ENCODE measurements at regions of chr4 and their contacts with region 1.

Region 1: GRCh38 chr4:15001869-15002658 is at the start of gene CPEB2:
- DNase-seq: peak; percentile 97
- ATAC-seq: peak; percentile 65
- H3K4me3 ChIP-seq: peak within 1 kb of the TSS; percentile 69
- H3K27ac ChIP-seq: peak within 1 kb of the TSS; percentile 93
- H3K4me1 ChIP-seq: no peaks in the 10 kb centered on the region
- H3K27me3 ChIP-seq: no peaks in the 10 kb centered on the region
- CTCF ChIP-seq: no peak
- POLR2A ChIP-seq: peak; percentile 96
- RAD21 ChIP-seq: no peak
- total RNA-seq, gene CPEB2: 10.6 and 18.1 TPM in 2 replicates

Region 2: GRCh38 chr4:13627606-13628301 is 1374.3 kb before region 1 on chr4 and contains the start of gene BOD1L1:
- CTCF ChIA-PET with region 1: no interaction called
- POLR2A ChIA-PET with region 1: no interaction called
- dilution Hi-C with region 1: no loop called
- in situ Hi-C with region 1: no loop called
- intact Hi-C with region 1: loop called (anchors 2 kb)
- DNase-seq: peak; percentile 89
- ATAC-seq: peak; percentile 94
- H3K4me3 ChIP-seq: peak within 1 kb of the TSS; percentile 94
- H3K27ac ChIP-seq: peak within 1 kb of the TSS; percentile 90
- H3K4me1 ChIP-seq: peaks cover 5% of the 10 kb centered on the region
- H3K27me3 ChIP-seq: no peaks in the 10 kb centered on the region
- CTCF ChIP-seq: peak; percentile 53
- POLR2A ChIP-seq: peak; percentile 89
- RAD21 ChIP-seq: peak; percentile 6; the same call in 1 of the 2 replicates
- total RNA-seq, gene BOD1L1: 26.9 and 34.4 TPM in 2 replicates

Region 3: DNA sequence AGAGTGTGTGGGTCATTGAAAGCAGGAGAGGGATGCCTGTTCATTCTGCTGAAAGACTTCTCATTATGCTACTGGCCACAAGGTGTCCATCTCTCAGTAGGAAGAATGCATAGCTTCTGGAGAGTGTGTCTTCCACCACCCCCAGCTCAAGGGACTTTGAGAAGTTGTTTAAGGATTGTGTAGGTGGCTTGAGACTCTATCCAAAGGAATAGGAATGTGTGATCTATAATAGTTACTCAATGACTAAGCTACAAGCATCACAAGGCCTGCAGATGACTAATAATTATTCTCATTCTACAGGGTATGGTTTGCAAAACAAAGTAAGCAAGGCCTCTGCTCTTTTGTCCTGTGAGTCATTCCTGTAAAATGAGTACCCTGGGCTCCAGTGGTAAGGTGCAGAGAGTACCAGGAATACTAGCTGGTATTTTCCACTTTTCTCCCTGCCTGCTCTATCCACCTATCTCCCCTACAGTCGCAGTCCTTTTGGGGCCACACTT is 1094.8 kb before region 1 on chr4:
- CTCF ChIA-PET with region 1: no interaction called
- POLR2A ChIA-PET with region 1: no interaction called
- dilution Hi-C with region 1: no loop called
- in situ Hi-C with region 1: no loop called
- intact Hi-C with region 1: loop called (anchors 5 kb)
- DNase-seq: peak; percentile 99
- ATAC-seq: peak; percentile 87
- H3K4me3 ChIP-seq: no peak overlapping the region
- H3K27ac ChIP-seq: peak overlapping the region; percentile 98
- H3K4me1 ChIP-seq: peaks cover 15% of the 10 kb centered on the region
- H3K27me3 ChIP-seq: no peaks in the 10 kb centered on the region
- CTCF ChIP-seq: peak; percentile 60
- POLR2A ChIP-seq: peak; percentile 52; the same call in 1 of the 2 replicates
- RAD21 ChIP-seq: peak; percentile 81

Region 4: GRCh38 chr4:13988353-13989305 is 1013.4 kb before region 1 on chr4:
- CTCF ChIA-PET with region 1: no interaction called
- POLR2A ChIA-PET with region 1: no interaction called
- dilution Hi-C with region 1: no loop called
- in situ Hi-C with region 1: no loop called
- intact Hi-C with region 1: loop called (anchors 2 kb)
- DNase-seq: peak; percentile 97
- ATAC-seq: peak; percentile 73
- H3K4me3 ChIP-seq: no peak overlapping the region
- H3K27ac ChIP-seq: peak overlapping the region; percentile 39
- H3K4me1 ChIP-seq: peaks cover 18% of the 10 kb centered on the region
- H3K27me3 ChIP-seq: no peaks in the 10 kb centered on the region
- CTCF ChIP-seq: no peak
- POLR2A ChIP-seq: no peak
- RAD21 ChIP-seq: no peak; the same call in 1 of the 2 replicates

Region 5: GRCh38 chr4:14916554-14917297 is 85.3 kb before region 1 on chr4:
- CTCF ChIA-PET with region 1: no interaction called
- POLR2A ChIA-PET with region 1: no interaction called
- dilution Hi-C with region 1: no loop called
- in situ Hi-C with region 1: no loop called
- intact Hi-C with region 1: loop called (anchors 5 kb)
- DNase-seq: peak; percentile 84
- ATAC-seq: peak; percentile 88
- H3K4me3 ChIP-seq: no peak overlapping the region
- H3K27ac ChIP-seq: no peak overlapping the region
- H3K4me1 ChIP-seq: peaks cover 5% of the 10 kb centered on the region
- H3K27me3 ChIP-seq: no peaks in the 10 kb centered on the region; the same call in 1 of the 2 replicates
- CTCF ChIP-seq: no peak
- POLR2A ChIP-seq: no peak
- RAD21 ChIP-seq: no peak

Region 6: DNA sequence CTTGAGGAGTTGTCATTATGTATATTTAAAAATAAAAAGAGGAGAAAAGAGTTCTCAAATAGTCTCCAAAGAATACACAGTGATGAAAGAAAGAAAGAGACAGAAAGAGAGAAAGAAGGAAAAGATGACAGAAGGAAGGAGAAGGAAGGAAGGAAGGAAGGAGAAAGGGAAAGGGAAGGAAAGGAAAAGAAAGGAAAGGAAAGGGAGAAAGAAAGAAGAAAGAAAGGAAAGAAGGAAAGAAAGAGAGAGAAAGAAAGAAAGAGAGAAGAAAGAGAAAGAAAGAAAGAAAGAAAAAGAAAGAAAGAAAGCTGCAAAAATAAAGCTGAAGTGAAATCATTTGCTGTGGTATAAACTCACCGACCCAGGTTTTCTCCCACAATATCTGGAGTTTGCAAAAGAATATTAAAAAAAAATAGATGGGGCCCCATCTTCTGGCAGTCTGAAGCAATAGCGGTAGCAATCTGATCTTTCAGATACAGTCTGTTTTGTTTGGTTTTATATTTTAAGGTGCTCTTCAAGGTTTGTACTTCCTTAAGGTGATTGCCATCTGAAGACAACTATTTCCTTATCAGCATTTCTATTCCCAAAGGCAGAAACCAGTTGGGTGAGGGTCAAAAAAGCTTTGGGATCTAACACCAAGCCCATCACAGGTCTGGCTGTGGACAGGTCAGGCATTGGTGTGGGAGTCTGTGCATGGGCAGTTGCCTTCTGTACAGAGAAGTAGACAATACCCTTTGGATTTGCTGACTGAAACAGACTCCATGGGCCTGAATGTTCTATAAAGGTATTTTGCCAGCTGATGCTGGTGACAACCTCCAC is 160.6 kb after region 1 on chr4:
- CTCF ChIA-PET with region 1: no interaction called
- POLR2A ChIA-PET with region 1: no interaction called
- dilution Hi-C with region 1: no loop called
- in situ Hi-C with region 1: no loop called
- intact Hi-C with region 1: loop called (anchors 2 kb)
- DNase-seq: peak; percentile 53
- ATAC-seq: peak; percentile 54
- H3K4me3 ChIP-seq: no peak overlapping the region
- H3K27ac ChIP-seq: no peak overlapping the region
- H3K4me1 ChIP-seq: peaks cover 2% of the 10 kb centered on the region; the same call in 1 of the 2 replicates
- H3K27me3 ChIP-seq: peaks cover 3% of the 10 kb centered on the region
- CTCF ChIP-seq: peak; percentile 55
- POLR2A ChIP-seq: no peak
- RAD21 ChIP-seq: peak; percentile 54

Region 7: GRCh38 chr4:15668566-15669435 is 666.7 kb after region 1 on chr4:
- CTCF ChIA-PET with region 1: no interaction called
- POLR2A ChIA-PET with region 1: no interaction called
- dilution Hi-C with region 1: no loop called
- in situ Hi-C with region 1: no loop called
- intact Hi-C with region 1: no loop called
- DNase-seq: no peak
- ATAC-seq: peak; percentile 70
- H3K4me3 ChIP-seq: no peak overlapping the region
- H3K27ac ChIP-seq: no peak overlapping the region
- H3K4me1 ChIP-seq: peaks cover 5% of the 10 kb centered on the region; the same call in 1 of the 2 replicates
- H3K27me3 ChIP-seq: no peaks in the 10 kb centered on the region
- CTCF ChIP-seq: no peak
- POLR2A ChIP-seq: no peak
- RAD21 ChIP-seq: no peak

Region 8: DNA sequence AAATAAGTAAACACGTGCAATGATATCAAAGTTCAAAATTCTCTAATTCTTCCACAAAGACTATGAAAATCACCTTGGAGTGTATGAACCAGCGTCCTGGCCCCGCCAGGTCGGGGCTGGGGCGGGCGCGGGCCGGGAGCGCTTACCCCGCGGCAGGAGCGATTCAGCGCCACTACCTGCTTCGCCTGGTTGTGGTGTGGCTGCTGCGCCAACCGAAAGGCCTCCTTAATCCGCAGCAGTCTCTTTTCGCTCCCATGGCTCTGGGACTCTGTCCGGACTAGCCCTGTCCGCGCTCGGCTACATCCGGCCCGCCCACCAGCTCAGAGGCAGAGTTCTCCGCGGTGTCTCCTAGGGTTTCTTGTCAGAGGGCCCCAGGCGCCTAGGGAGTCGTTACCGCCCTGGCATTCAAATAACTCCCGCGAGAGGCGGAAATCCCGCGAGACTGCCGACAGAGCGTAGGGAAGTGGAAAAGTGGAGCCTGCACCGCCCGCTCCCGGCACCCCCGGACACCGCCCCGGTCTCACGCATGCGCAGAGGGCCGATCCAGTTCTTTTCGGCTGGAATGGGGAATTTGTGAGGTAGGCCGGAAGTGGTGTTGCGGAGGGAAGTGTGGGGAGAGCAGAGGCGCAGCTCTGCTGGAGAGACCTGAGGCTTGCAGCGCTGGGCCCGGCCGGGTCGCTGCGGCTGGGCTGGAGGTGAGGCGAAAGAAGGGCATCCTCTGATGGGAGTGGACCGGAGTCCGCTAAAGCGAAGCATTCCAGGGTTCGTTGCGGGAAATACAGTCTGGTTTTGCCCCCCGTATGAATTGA is 679.3 kb after region 1 on chr4 and contains the start of gene FAM200B:
- CTCF ChIA-PET with region 1: no interaction called
- POLR2A ChIA-PET with region 1: no interaction called
- dilution Hi-C with region 1: no loop called
- in situ Hi-C with region 1: loop called (anchors 25 kb)
- intact Hi-C with region 1: no loop called
- DNase-seq: peak; percentile 97
- ATAC-seq: peak; percentile 96
- H3K4me3 ChIP-seq: peak within 1 kb of the TSS; percentile 86
- H3K27ac ChIP-seq: peak within 1 kb of the TSS; percentile 98
- H3K4me1 ChIP-seq: peaks cover 7% of the 10 kb centered on the region
- H3K27me3 ChIP-seq: no peaks in the 10 kb centered on the region
- CTCF ChIP-seq: peak; percentile 22; the same call in 1 of the 2 replicates
- POLR2A ChIP-seq: peak; percentile 94
- RAD21 ChIP-seq: peak; percentile 44; the same call in 1 of the 2 replicates
- total RNA-seq, gene FAM200B: 16.7 and 20.6 TPM in 2 replicates